Caco-2 (cell line): ENCODE measurements at regions of chr3 and their contacts with region 1.

Region 1: DNA sequence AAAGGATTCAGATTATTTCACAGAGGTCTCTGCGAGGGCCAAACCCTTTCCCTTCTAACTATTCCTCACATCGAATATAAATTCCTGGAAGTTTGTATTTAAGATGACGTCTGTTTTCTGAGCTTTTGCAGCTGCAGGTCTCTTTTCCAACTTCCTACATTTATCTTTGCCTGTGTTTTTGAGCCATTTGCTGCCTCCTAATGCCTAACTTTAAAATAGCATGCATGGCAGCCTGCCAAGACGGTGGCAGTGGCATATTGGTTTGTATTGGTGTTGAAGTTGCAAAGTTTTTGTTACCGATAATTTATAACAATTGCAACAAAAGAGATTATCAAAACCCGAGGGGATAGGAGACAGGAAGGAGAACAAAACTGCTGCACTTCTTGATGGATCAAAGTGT is 187.1 kb upstream of the DNAJC19 start:
- DNase-seq: peak in 1 of 2 experiments; percentile 15
- H3K4me3 ChIP-seq: no peak overlapping the region
- H3K4me3 Mint-ChIP-seq: no peak overlapping the region
- H3K27ac Mint-ChIP-seq: no peak overlapping the region
- H3K4me1 ChIP-seq: no peaks in the 10 kb centered on the region
- H3K4me1 Mint-ChIP-seq: no peaks in the 10 kb centered on the region
- H3K27me3 ChIP-seq: no peaks in the 10 kb centered on the region
- H3K27me3 Mint-ChIP-seq: peaks cover 4% of the 10 kb centered on the region
- CTCF ChIP-seq: peak; percentile 23 to 49

Region 2: GRCh38 chr3:181103605-181104004 is 73.0 kb before region 1 on chr3:
- CTCF ChIA-PET with region 1: no interaction called
- POLR2A ChIA-PET with region 1: no interaction called
- intact Hi-C with region 1: loop called (anchors 2 kb)
- DNase-seq: peak in 1 of 2 experiments; percentile 22
- H3K4me3 ChIP-seq: no peak overlapping the region
- H3K4me3 Mint-ChIP-seq: no peak overlapping the region
- H3K27ac Mint-ChIP-seq: no peak overlapping the region
- H3K4me1 ChIP-seq: no peaks in the 10 kb centered on the region
- H3K4me1 Mint-ChIP-seq: no peaks in the 10 kb centered on the region
- H3K27me3 ChIP-seq: no peaks in the 10 kb centered on the region
- H3K27me3 Mint-ChIP-seq: no peaks in the 10 kb centered on the region
- CTCF ChIP-seq: no peak